Endothelial cell of umbilical vein (primary cell): ENCODE measurements at regions of chr2 and their contacts with region 1.

Region 1: DNA sequence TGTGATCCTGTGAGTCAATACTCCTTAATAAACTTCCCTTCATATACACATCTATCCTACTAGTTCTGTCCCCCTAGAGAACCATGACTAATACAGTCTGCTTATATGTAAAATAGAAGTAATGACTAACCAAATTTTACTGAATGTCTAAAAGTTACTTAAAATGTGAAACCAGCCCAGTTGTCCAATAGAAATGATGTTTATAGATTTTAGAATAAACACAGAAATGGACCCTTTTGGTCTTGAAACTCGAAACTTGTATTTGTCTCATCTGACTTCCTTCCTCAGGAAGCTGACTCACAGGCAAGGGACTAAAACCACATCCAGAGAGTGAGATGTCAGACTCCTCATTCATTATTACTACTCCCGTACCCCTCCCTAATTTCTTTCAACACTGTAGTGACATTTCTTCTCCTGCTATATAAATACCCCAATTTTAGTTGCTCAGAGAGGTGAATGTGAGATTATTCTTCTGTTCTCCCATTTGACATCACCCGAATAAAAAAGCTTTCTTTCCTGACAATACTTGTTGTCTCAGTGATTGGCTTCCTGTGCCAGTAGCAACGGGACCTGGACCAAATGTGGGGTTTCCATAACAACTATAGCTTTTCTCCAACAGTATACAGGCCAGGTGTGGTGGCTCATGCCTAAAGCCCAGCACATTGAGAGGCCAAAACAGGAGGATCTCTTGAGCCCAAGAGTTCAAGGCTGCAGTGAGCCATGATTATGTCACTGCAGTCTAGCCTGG is 486.0 kb downstream of the ERBB4 start:
- DNase-seq: peak; percentile 78
- H3K4me3 ChIP-seq: no peak overlapping the region
- H3K27ac ChIP-seq: peak overlapping the region; percentile 95
- H3K4me1 ChIP-seq: peaks cover 6% of the 10 kb centered on the region
- H3K27me3 ChIP-seq: no peaks in the 10 kb centered on the region
- CTCF ChIP-seq: no peak
- POLR2A ChIP-seq: no peak

Region 2: DNA sequence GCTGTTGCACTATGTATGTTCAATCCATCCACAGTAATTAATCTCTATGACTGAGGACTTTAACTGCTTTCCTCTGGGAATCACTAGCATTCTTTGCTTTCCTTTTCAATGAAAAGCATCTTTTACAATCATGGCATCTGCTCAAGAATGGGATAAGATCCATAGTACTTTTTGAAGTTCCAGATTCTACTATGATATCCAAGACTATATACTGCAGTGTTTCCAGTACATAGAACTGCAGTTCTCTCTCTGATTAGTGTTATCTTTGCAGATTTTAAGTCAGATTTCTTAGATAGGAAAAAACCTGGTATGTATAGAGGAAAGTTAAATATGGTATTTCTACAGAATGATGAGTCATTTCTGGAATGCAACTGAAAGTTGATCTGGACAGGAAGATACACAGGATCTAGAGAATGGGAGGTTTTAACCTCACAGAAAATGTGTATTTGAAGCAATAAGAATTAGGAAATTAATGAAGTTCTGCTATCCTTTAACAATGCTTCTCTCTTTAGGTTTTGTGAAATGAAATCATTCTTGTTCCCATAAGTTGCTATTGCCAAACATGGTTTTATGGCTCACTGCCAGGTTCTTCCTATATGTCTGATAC is 184.6 kb before region 1 on chr2:
- CTCF ChIA-PET with region 1: no interaction called
- POLR2A ChIA-PET with region 1: no interaction called
- dilution Hi-C with region 1: no loop called
- intact Hi-C with region 1: loop called (anchors 5 kb)
- DNase-seq: peak; percentile 90
- H3K4me3 ChIP-seq: peak overlapping the region in 1 of 3 experiments; percentile 15
- H3K27ac ChIP-seq: peak overlapping the region; percentile 61
- H3K4me1 ChIP-seq: peaks cover 19% of the 10 kb centered on the region
- H3K27me3 ChIP-seq: no peaks in the 10 kb centered on the region
- CTCF ChIP-seq: no peak
- POLR2A ChIP-seq: no peak

Region 3: GRCh38 chr2:211981451-211981850 is 71.1 kb before region 1 on chr2:
- CTCF ChIA-PET with region 1: no interaction called
- POLR2A ChIA-PET with region 1: no interaction called
- dilution Hi-C with region 1: no loop called
- intact Hi-C with region 1: loop called (anchors 2 kb)
- DNase-seq: peak; percentile 24
- H3K4me3 ChIP-seq: no peak overlapping the region
- H3K27ac ChIP-seq: peak overlapping the region; percentile 41
- H3K4me1 ChIP-seq: peaks cover 7% of the 10 kb centered on the region
- H3K27me3 ChIP-seq: no peaks in the 10 kb centered on the region
- CTCF ChIP-seq: no peak
- POLR2A ChIP-seq: no peak

Region 4: DNA sequence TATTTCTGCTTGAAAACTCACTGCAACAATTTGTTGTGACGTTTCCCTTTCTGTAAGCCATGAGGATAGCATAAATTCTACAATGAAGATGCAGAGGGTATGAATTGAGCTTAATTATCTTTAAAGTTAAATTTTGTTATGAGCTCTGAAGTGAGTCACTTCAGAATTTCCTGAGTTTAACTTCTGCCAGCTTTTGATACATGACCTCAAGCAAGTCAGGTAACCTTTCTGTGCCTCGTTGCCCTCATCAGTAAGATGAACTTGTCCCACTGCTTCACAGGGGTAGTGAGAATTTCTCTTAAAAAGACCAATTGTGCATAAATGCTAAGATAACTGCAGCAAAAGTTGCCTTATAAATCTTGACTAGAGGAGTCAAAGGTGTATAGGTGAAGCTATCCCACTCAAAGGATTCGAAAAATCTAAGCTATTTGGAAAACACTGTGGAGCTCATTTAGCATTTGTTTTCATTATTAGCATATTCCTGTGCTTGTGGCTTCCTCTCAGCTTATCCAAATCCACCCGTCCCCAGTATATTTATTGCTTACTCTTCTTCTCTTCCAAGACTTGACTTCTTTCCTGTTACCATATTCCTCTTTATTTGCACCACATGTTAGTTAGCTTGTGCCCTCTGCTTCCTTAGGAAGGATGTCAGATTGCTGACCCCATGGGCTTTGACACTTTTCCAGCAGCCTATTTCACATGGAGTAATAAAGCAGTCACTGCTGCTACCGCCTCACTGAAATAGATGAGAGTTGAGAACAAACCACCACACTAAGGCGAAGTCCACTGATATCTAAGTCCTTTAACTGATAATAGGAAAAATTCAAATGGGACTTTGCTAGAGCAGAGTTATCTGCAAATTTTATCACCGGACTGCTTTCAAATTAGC is 57.5 kb after region 1 on chr2:
- CTCF ChIA-PET with region 1: interaction called, 4 read pairs
- POLR2A ChIA-PET with region 1: no interaction called
- dilution Hi-C with region 1: no loop called
- intact Hi-C with region 1: loop called (anchors 1 kb)
- DNase-seq: peak; percentile 92
- H3K4me3 ChIP-seq: peak overlapping the region in 1 of 3 experiments; percentile 5
- H3K27ac ChIP-seq: peak overlapping the region; percentile 20
- H3K4me1 ChIP-seq: peaks cover 26% of the 10 kb centered on the region
- H3K27me3 ChIP-seq: no peaks in the 10 kb centered on the region
- CTCF ChIP-seq: no peak
- POLR2A ChIP-seq: no peak

Region 5: DNA sequence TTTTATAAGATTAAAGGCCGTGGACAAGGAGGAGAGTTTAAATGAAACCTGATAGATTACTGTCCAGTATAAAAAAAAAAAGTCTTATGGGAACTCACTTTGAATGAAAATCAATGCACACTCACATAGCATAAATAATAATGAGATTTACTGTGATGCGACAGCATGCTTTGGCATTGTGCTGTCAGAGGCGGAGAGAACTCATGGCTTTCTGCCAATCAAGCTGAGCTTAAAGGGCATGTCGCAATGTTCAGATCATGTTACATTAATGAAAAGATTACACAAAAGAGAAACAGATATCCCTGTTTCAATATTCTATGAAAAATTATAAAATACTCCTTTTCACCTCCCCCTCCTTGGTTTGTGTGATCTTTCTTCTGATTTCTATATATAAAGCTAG is 175.2 kb after region 1 on chr2:
- CTCF ChIA-PET with region 1: no interaction called
- POLR2A ChIA-PET with region 1: no interaction called
- dilution Hi-C with region 1: no loop called
- intact Hi-C with region 1: no loop called
- DNase-seq: peak; percentile 59
- H3K4me3 ChIP-seq: no peak overlapping the region
- H3K27ac ChIP-seq: no peak overlapping the region
- H3K4me1 ChIP-seq: no peaks in the 10 kb centered on the region
- H3K27me3 ChIP-seq: no peaks in the 10 kb centered on the region
- CTCF ChIP-seq: no peak
- POLR2A ChIP-seq: no peak